ENCODE measurements at regions of chr2 and their contacts with region 1.

Region 1: GRCh38 chr2:172931918-172932520 is 143.6 kb upstream of the MAP3K20 start:
- DNase-seq: no peak
- H3K4me3 ChIP-seq: peak overlapping the region in 1 of 8 donors; percentile 25
- H3K27ac ChIP-seq: peak overlapping the region in 1 of 8 donors; percentile 37
- H3K4me1 ChIP-seq: peaks cover 0 to 14% (median 6%) of the 10 kb centered on the region in 6 donors
- H3K27me3 ChIP-seq: peaks cover 0 to 5% (median 0%) of the 10 kb centered on the region in 7 donors
- CTCF ChIP-seq: peak in 9 of 11 experiments; percentile 40 to 71 (median 60)
- POLR2A ChIP-seq: no peak

Region 2: GRCh38 chr2:172806493-172806892 is 125.5 kb before region 1 on chr2:
- intact Hi-C with region 1: loop called (anchors 5 kb)
- DNase-seq: no peak
- H3K4me3 ChIP-seq: no peak overlapping the region
- H3K27ac ChIP-seq: no peak overlapping the region
- H3K4me1 ChIP-seq: no peaks in the 10 kb centered on the region
- H3K27me3 ChIP-seq: no peaks in the 10 kb centered on the region
- CTCF ChIP-seq: peak; percentile 35 to 79 (median 68)
- POLR2A ChIP-seq: no peak

Region 3: DNA sequence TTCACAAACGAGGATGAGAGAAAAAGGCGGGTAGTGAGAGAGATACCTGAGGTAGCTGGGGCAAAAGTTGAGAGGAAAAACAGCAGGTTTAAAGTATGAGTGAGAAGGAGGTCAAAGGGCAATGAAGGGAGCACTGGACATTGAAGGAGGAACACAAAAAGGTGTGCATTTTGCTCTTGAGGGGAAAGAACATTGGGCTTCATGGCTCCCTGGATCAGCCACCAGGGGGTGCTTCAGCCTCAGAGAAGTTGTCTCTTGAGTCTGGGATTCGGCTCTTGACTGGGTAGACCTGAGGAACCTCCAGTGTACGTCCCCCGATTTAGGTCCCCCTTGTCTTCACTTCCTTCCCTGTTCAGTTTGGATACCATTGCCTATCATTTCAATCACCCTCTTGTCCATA is 67.8 kb before region 1 on chr2:
- intact Hi-C with region 1: loop called (anchors 5 kb)
- DNase-seq: no peak
- H3K4me3 ChIP-seq: no peak overlapping the region
- H3K27ac ChIP-seq: no peak overlapping the region
- H3K4me1 ChIP-seq: peaks cover 0 to 15% (median 2%) of the 10 kb centered on the region in 6 donors
- H3K27me3 ChIP-seq: peaks cover 0 to 21% (median 0%) of the 10 kb centered on the region in 7 donors
- CTCF ChIP-seq: peak in 9 of 11 experiments; percentile 26 to 65 (median 49)
- POLR2A ChIP-seq: no peak

Region 4: GRCh38 chr2:173288561-173288960 is 356.5 kb after region 1 on chr2:
- intact Hi-C with region 1: no loop called
- DNase-seq: no peak
- H3K4me3 ChIP-seq: no peak overlapping the region
- H3K27ac ChIP-seq: no peak overlapping the region
- H3K4me1 ChIP-seq: no peaks in the 10 kb centered on the region
- H3K27me3 ChIP-seq: no peaks in the 10 kb centered on the region
- CTCF ChIP-seq: no peak
- POLR2A ChIP-seq: no peak

Measured in spleen (tissue), 13 donors.